ENCODE measurements at regions of chr9 and their contacts with region 1.

Region 1: DNA sequence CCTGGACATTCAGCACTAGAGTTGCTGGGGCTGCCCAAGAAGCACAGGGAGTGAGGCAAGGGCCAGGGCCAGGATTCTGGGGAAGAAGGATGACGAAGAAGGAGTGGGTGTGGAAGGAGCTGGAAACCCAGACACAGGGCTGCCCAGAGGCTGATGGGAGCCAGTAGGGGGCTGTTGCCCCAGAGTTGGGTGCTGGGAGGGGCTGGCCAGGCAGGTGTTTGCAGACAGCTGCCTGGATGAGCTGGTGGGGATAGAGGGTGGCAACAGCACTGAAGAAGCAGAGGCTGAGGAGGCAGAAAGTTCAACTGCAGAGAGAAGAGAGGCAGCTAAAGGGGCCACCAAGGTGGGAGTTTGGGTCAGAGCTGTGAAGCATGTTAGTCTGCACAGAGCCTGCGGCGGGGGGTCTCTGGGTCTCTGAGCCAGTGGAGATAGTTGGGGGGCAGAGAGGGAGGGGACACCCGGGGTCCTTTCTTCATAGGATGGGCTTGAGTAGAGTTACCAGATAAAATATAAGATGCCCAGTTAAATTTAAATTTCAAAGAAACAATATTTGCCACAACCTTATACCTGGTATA is 2.5 kb upstream of the AQP7 start:
- DNase-seq: peak; percentile 46
- H3K4me3 Mint-ChIP-seq: no peak overlapping the region
- H3K27ac Mint-ChIP-seq: peak overlapping the region; percentile 16
- H3K4me1 Mint-ChIP-seq: peaks cover 11% of the 10 kb centered on the region
- H3K27me3 Mint-ChIP-seq: no peaks in the 10 kb centered on the region
- CTCF ChIP-seq: no peak

Region 2: GRCh38 chr9:33297432-33297831 is 107.4 kb before region 1 on chr9:
- CTCF ChIA-PET with region 1: no interaction called
- POLR2A ChIA-PET with region 1: no interaction called
- intact Hi-C with region 1: no loop called
- DNase-seq: peak; percentile 5
- H3K4me3 Mint-ChIP-seq: peak overlapping the region; percentile 19
- H3K27ac Mint-ChIP-seq: peak overlapping the region; percentile 59
- H3K4me1 Mint-ChIP-seq: peaks cover 49% of the 10 kb centered on the region
- H3K27me3 Mint-ChIP-seq: no peaks in the 10 kb centered on the region
- CTCF ChIP-seq: no peak

Region 3: GRCh38 chr9:33374634-33375213 is 30.2 kb before region 1 on chr9:
- CTCF ChIA-PET with region 1: interaction called, 12 read pairs
- POLR2A ChIA-PET with region 1: no interaction called
- intact Hi-C with region 1: no loop called
- DNase-seq: peak; percentile 79
- H3K4me3 Mint-ChIP-seq: no peak overlapping the region
- H3K27ac Mint-ChIP-seq: no peak overlapping the region
- H3K4me1 Mint-ChIP-seq: peaks cover 10% of the 10 kb centered on the region
- H3K27me3 Mint-ChIP-seq: no peaks in the 10 kb centered on the region
- CTCF ChIP-seq: peak; percentile 83

Region 4: DNA sequence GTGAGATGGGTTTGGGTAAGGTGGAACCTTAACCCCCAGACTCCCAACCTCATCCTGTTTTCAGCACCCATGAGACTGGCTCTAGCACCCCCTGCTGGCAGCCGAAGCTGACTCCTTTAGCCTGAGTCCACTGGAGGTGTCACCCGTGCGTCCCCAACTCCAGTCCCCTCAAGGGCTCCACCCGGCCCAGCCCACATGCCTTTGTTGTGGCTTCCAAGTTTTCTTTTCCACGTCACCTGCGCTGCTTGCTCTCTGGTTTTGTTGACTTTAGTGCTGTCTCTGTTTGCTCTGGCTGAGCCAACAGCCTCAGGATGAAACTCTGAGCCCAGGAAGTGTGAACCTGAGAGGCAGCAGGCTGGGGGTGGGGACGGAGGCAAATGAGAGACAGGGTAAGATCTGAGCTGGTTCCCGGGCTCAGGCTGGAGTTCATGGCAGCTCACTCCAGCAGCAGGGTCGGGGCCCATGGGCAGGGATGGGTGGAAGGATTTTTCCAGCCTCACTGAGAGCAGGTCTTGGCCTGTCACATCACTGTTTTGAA is 10.7 kb after region 1 on chr9:
- CTCF ChIA-PET with region 1: interaction called, 25 read pairs
- POLR2A ChIA-PET with region 1: interaction called, 3 read pairs
- intact Hi-C with region 1: no loop called
- DNase-seq: peak; percentile 82
- H3K4me3 Mint-ChIP-seq: no peak overlapping the region
- H3K27ac Mint-ChIP-seq: peak overlapping the region; percentile 36
- H3K4me1 Mint-ChIP-seq: peaks cover 34% of the 10 kb centered on the region
- H3K27me3 Mint-ChIP-seq: no peaks in the 10 kb centered on the region
- CTCF ChIP-seq: peak; percentile 57

Region 5: GRCh38 chr9:33446946-33447798 is 42.3 kb after region 1 on chr9 and contains the start of gene AQP3:
- CTCF ChIA-PET with region 1: interaction called, 46 read pairs
- POLR2A ChIA-PET with region 1: interaction called, 4 read pairs
- intact Hi-C with region 1: no loop called
- DNase-seq: peak; percentile 64
- H3K4me3 Mint-ChIP-seq: peak within 1 kb of the TSS; percentile 67
- H3K27ac Mint-ChIP-seq: peak within 1 kb of the TSS; percentile 47
- H3K4me1 Mint-ChIP-seq: peaks cover 42% of the 10 kb centered on the region
- H3K27me3 Mint-ChIP-seq: no peaks in the 10 kb centered on the region
- CTCF ChIP-seq: no peak
- total RNA-seq, gene AQP3: 0.83 and 0.89 TPM in 2 replicates

Region 6: DNA sequence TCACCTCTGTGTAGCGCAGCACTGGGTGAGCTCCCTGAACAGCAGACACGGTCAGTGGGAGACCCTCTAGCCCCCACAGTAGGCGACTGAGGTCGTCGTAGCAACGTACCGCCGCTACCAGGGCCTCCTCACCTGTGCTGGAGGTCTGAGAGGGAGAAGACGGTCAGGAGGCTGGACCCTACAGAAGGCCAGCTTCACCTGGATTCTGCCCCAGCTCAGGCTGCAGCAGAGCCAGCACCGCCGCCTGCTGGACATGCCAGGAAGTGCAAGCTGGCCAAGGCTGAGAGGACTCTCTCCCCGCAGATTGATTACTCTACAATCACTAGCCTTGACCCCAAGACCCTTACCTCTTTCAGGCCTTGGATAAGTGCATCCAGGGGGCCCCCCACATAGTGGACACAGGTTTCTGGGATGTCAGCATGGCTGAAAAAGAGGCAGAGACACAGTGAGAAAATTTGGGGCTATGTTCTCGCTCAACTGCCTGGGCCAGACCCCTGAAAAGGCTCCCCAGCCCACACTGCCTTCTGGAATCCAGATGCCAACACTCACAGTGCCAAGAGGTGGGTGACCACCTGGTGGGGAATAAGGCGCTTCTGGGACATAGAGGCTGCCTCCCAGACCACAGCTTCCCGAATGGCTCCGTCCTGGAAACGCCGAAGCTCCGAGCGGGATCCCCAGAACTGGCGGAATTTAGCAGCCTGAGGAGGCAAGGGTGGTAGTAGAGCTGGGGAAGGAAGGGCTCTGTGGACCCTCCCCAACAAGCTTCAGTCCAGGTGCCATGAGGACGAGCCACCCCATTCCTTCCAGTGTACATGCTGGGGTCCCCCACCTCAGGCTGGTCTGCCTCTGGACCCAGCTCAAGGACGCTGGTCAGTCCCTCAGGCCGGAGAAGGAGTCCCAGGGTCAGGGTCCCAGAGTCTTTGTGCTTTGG is 62.0 kb after region 1 on chr9:
- CTCF ChIA-PET with region 1: interaction called, 114 read pairs
- POLR2A ChIA-PET with region 1: interaction called, 13 read pairs
- intact Hi-C with region 1: loop called (anchors 1 kb)
- DNase-seq: peak; percentile 54
- H3K4me3 Mint-ChIP-seq: no peak overlapping the region
- H3K27ac Mint-ChIP-seq: no peak overlapping the region
- H3K4me1 Mint-ChIP-seq: peaks cover 6% of the 10 kb centered on the region
- H3K27me3 Mint-ChIP-seq: no peaks in the 10 kb centered on the region
- CTCF ChIP-seq: peak; percentile 97

Region 7: GRCh38 chr9:33517373-33517772 is 112.5 kb after region 1 on chr9:
- CTCF ChIA-PET with region 1: interaction called, 4 read pairs
- POLR2A ChIA-PET with region 1: interaction called, 3 read pairs
- intact Hi-C with region 1: loop called (anchors 5 kb)
- DNase-seq: peak; percentile 68
- H3K4me3 Mint-ChIP-seq: no peak overlapping the region
- H3K27ac Mint-ChIP-seq: no peak overlapping the region
- H3K4me1 Mint-ChIP-seq: peaks cover 5% of the 10 kb centered on the region
- H3K27me3 Mint-ChIP-seq: no peaks in the 10 kb centered on the region
- CTCF ChIP-seq: peak; percentile 53

Region 8: GRCh38 chr9:33721674-33722358 is 316.9 kb after region 1 on chr9:
- CTCF ChIA-PET with region 1: interaction called, 6 read pairs
- POLR2A ChIA-PET with region 1: no interaction called
- intact Hi-C with region 1: loop called (anchors 5 kb)
- DNase-seq: peak; percentile 82
- H3K4me3 Mint-ChIP-seq: no peak overlapping the region
- H3K27ac Mint-ChIP-seq: no peak overlapping the region
- H3K4me1 Mint-ChIP-seq: no peaks in the 10 kb centered on the region
- H3K27me3 Mint-ChIP-seq: peaks cover 24% of the 10 kb centered on the region
- CTCF ChIP-seq: peak; percentile 100

Region 9: DNA sequence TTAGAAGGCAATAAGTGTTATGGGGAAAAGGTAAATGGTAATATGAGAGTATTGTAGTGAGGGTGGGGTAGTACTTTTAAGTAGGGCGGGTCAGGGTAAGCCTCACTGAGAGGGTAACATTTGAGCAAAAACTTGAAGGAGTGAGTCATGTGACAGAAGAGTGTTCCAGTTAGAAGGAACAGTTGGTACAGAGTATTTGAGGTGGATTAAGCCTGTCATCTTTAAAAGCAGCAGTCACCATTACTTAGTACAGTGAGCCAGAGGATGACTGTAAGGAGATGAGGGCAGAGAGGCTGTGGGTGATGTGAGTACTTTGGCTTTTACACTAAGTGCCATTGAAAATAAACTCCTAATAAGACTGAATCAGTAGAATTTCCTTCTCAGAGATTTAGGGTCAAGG is 828.8 kb after region 1 on chr9:
- CTCF ChIA-PET with region 1: no interaction called
- POLR2A ChIA-PET with region 1: no interaction called
- intact Hi-C with region 1: no loop called
- DNase-seq: no peak
- H3K4me3 Mint-ChIP-seq: no peak overlapping the region
- H3K27ac Mint-ChIP-seq: peak overlapping the region; percentile 25
- H3K4me1 Mint-ChIP-seq: peaks cover 12% of the 10 kb centered on the region
- H3K27me3 Mint-ChIP-seq: no peaks in the 10 kb centered on the region
- CTCF ChIP-seq: no peak